A549 (cell line): ENCODE measurements at regions of chr17 and their contacts with region 1.

Region 1: GRCh38 chr17:55770148-55770870 is 19.5 kb downstream of the PCTP start:
- DNase-seq: peak; percentile 64 to 84
- ATAC-seq: peak; percentile 76 to 93; a peak in 5 of 6 replicates
- H3K4me3 ChIP-seq: no peak overlapping the region
- H3K27ac ChIP-seq: peak overlapping the region in 1 of 2 experiments; percentile 12; a peak in 1 of 6 replicates
- H3K4me1 ChIP-seq: peaks cover 9% of the 10 kb centered on the region
- CTCF ChIP-seq: peak; percentile 91
- EP300 ChIP-seq: no peak
- POLR2A ChIP-seq: no peak
- RAD21 ChIP-seq: peak; percentile 82 to 90

Region 2: GRCh38 chr17:55295411-55296170 is 474.7 kb before region 1 on chr17:
- CTCF ChIA-PET with region 1: no interaction called
- POLR2A ChIA-PET with region 1: no interaction called
- DNase-seq: peak; percentile 68 to 90
- ATAC-seq: peak; percentile 85 to 96
- H3K4me3 ChIP-seq: no peak overlapping the region
- H3K27ac ChIP-seq: peak overlapping the region in 1 of 2 experiments; percentile 11; a peak in 3 of 6 replicates
- H3K4me1 ChIP-seq: 0 out of 3 replicates have a peak, but pooled peaks cover 3% of the 10 kb centered on the region
- CTCF ChIP-seq: peak; percentile 90
- EP300 ChIP-seq: no peak
- POLR2A ChIP-seq: no peak
- RAD21 ChIP-seq: peak; percentile 86 to 91

Region 3: DNA sequence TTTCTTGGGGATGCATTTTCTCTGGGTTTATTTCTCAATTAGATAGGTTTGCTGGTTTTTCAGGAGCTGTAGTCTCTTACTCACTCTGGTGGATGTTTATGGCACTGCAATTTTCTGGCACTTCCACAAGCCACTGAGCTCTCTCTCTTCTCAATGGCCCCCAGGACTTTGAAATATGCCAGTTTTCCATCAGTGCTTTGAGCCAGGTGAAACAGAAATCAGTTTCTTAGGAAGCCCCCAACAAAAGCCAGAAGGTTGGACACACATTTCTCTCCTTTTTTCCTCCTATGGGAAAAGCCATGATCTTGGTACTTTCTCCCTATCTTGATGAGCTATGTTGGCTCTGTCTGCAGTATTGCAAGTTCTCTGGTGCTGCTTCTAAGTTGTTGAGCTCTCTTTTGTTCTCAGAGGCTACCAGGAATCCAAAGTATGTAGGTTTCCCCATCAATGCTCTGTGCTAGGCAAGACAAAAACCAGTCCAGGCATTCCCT is 168.4 kb before region 1 on chr17:
- CTCF ChIA-PET with region 1: interaction called, 27 read pairs
- POLR2A ChIA-PET with region 1: no interaction called
- DNase-seq: peak; percentile 40 to 60
- ATAC-seq: peak; percentile 73 to 89; a peak in 5 of 6 replicates
- H3K4me3 ChIP-seq: no peak overlapping the region
- H3K27ac ChIP-seq: no peak overlapping the region
- H3K4me1 ChIP-seq: peaks cover 2% of the 10 kb centered on the region; the same call in 2 of the 3 replicates
- CTCF ChIP-seq: peak; percentile 83
- EP300 ChIP-seq: no peak
- POLR2A ChIP-seq: no peak
- RAD21 ChIP-seq: peak; percentile 91 to 93

Region 4: DNA sequence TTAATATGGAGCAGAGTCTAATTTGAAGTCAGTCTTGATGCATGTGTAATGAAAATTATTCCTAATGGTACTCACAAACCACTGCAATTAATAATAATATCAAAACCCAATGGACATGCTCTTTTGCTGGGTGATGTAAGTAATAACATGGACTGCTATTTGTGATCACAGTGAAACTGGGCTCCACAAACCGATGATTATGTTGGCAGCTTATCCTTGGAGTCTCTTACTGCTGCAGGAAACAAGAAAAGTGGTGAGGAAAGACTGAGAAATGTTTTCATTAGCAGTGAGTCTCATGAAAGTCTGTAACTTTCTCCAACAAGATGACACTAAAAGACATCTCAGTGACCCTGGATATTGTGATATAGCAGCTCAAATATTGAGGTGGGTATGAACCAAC is 92.9 kb before region 1 on chr17:
- CTCF ChIA-PET with region 1: no interaction called
- POLR2A ChIA-PET with region 1: no interaction called
- DNase-seq: no peak
- ATAC-seq: no peak
- H3K4me3 ChIP-seq: no peak overlapping the region
- H3K27ac ChIP-seq: no peak overlapping the region
- H3K4me1 ChIP-seq: no peaks in the 10 kb centered on the region
- CTCF ChIP-seq: no peak
- EP300 ChIP-seq: no peak
- POLR2A ChIP-seq: no peak
- RAD21 ChIP-seq: no peak

Region 5: DNA sequence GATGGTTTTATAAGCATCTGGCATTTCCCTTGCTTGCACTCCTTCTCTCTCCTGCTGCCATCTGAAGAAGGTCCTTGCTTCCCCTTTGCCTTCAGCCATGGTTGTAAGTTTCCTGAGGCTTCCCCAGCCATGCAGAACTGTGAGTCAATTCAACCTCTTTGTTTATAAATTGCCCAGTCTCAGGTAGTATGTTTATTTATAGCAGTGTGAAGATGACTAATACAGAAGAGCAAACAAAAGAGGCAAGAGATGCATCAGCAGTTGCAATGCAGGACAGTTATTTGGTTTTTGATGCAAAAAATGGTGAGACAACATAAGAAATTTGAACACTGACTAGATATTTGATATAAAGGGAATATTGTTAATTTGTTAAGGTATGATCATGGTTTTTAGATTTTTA is 64.5 kb before region 1 on chr17:
- CTCF ChIA-PET with region 1: interaction called, 14 read pairs
- POLR2A ChIA-PET with region 1: no interaction called
- DNase-seq: peak; percentile 16 to 48
- ATAC-seq: peak; percentile 76 to 79; a peak in 5 of 6 replicates
- H3K4me3 ChIP-seq: no peak overlapping the region
- H3K27ac ChIP-seq: no peak overlapping the region
- H3K4me1 ChIP-seq: peaks cover 15% of the 10 kb centered on the region
- CTCF ChIP-seq: no peak
- EP300 ChIP-seq: no peak
- POLR2A ChIP-seq: no peak
- RAD21 ChIP-seq: no peak

Region 6: GRCh38 chr17:55750750-55751657 is 19.3 kb before region 1 on chr17 and contains the start of gene PCTP:
- CTCF ChIA-PET with region 1: interaction called, 36 read pairs
- POLR2A ChIA-PET with region 1: interaction called, 9 read pairs
- DNase-seq: peak; percentile 91 to 94
- ATAC-seq: peak; percentile 97 to 99
- H3K4me3 ChIP-seq: peak within 1 kb of the TSS; percentile 58
- H3K27ac ChIP-seq: peak within 1 kb of the TSS; percentile 86 to 94
- H3K4me1 ChIP-seq: peaks cover 12% of the 10 kb centered on the region; the same call in 2 of the 3 replicates
- CTCF ChIP-seq: 0 out of 3 replicates have a peak, but pooled peaks have one; percentile 5
- EP300 ChIP-seq: no peak
- POLR2A ChIP-seq: peak; percentile 87
- RAD21 ChIP-seq: no peak; a peak in 1 of 5 replicates
- polyA plus RNA-seq, gene PCTP: 28.0 and 31.5 TPM in 2 replicates